ENCODE measurements at regions of chr1 and their contacts with region 1.

Region 1: DNA sequence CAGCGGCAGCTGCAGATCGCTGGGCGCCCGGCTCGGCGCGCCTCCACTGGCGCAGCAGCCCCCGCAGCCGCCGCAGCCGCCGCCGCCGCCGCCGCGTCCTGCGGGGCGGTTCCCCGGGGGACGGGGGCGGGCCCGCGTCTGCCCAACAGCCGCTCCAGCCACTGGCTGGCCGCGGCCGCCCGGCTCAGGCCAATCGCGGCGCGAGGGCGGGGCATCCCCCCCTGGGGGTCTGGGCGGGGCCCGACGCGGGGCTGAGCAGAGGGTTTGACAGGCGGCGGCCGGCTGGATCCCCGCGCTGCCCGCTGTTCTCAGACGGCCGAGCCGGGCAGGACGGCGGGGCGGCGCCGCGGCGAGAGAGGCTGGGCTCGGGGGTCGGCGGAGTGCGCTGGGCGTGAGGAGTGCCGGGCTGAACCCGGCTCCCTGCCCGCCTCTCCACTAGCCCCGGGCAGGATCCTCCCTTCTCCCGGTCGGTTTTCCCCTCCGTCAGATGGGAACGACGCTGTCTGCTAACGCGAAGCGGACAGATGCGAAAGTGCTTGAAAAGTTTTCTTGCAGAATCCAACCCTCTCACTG is at the start of gene GLIS1:
- DNase-seq: no peak
- H3K4me3 ChIP-seq: peak within 1 kb of the TSS; percentile 84
- H3K27ac ChIP-seq: peak within 1 kb of the TSS; percentile 47
- H3K27me3 ChIP-seq: no peaks in the 10 kb centered on the region
- CTCF ChIP-seq: no peak
- polyA plus RNA-seq, gene GLIS1: 0.77 and 1.3 TPM in 2 replicates

Region 2: DNA sequence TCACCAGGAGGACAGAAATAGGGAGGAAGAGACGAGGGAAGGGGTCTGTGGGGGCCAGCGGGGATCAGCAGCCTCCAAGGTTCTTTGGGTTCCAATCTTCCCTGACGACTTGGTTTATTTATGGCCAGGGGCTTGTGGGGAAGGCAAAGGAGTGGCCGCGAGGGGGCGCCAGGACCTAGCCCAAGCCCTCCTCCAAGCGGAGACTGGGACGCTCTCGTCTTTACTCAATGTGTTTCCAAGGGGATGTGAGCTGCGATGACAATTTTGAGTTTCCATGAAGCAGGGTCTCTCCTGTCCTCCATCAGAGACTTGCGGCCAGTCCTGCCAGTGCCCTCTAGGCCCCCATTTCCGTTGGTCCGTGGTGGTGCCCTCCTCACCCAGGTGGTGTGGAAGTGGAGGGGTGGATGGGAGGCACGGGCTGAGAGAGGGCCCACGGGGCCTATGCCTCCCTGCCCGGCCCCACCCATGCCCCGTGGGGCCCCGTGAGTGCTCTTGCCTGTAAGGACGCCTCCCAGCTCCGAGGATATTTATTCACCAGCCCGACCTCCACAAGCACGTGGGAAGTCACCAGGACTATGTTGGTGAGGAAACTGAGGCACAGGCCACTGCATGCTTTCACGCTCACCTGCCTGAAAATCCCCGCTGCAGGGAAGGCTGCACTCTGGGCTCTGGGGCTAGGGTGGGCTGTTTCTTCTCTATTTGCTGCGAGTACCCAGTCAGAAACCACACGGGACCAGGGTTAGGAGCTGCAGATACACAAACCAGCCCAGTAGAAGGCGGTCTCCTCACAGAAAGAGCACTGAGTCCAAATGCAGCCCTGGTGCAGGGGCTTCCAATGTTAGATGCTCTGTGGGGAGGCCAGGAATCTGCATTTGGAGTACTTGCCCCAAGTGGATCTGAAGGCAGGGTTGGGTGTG is 253.5 kb before region 1 on chr1:
- CTCF ChIA-PET with region 1: interaction called, 11 read pairs
- POLR2A ChIA-PET with region 1: no interaction called
- DNase-seq: peak; percentile 52
- H3K4me3 ChIP-seq: no peak overlapping the region
- H3K27ac ChIP-seq: no peak overlapping the region
- H3K27me3 ChIP-seq: peaks cover 43% of the 10 kb centered on the region
- CTCF ChIP-seq: peak; percentile 92

Region 3: GRCh38 chr1:53959664-53960250 is 220.6 kb after region 1 on chr1:
- CTCF ChIA-PET with region 1: interaction called, 10 read pairs
- POLR2A ChIA-PET with region 1: no interaction called
- DNase-seq: no peak
- H3K4me3 ChIP-seq: no peak overlapping the region
- H3K27ac ChIP-seq: no peak overlapping the region
- H3K27me3 ChIP-seq: no peaks in the 10 kb centered on the region
- CTCF ChIP-seq: peak; percentile 46

Measured in AG04450 (cell line).